Aorta (tissue), 5 donors: ENCODE measurements at regions of chr13 and their contacts with region 1.

Region 1: DNA sequence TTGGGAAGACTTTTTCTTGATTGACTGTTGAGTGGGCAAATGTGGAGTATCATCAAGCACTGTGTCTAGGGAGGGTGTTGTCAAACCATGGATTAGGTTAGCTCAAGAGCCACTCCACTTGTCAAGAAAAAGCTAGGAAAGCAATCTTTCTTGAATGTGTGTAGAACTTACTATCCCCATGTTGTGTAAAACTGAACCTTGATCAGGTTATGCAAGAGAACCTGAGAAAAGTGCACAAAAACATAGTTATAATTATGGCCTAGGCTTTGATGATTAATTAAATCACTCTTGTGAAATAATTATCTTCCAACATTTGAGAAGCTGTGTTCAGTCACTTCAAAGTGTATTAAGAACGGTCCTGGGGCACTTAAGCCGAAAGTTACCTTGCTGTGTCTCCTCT is 238.2 kb upstream of the OBI1 start:
- DNase-seq: no peak
- ATAC-seq: no peak
- H3K4me3 ChIP-seq: no peak overlapping the region
- H3K27ac ChIP-seq: no peak overlapping the region
- H3K4me1 ChIP-seq: no peaks in the 10 kb centered on the region
- H3K27me3 ChIP-seq: no peaks in the 10 kb centered on the region

Region 2: DNA sequence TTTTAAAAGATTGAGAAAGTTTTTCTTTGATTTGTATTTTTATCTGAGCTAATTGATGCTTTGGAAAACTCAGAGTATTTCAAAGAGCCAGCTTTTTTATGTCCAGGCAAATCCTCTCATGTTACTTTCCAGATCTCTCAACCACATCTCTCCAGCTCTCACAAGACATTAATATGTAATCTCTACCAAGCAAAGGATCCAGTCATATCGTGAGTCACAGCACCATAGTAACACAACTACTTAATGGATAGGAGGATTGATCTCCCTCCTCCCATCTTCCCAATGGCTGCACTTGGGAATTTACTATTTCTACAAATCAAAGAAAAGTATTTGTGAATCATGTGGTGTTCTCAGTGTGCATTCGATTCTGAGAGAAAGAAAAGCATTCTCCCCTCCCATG is 357.1 kb before region 1 on chr13:
- intact Hi-C with region 1: loop called in 1 of 2 experiments (anchors 5 kb)
- DNase-seq: no peak
- ATAC-seq: no peak
- H3K4me3 ChIP-seq: no peak overlapping the region
- H3K27ac ChIP-seq: no peak overlapping the region
- H3K4me1 ChIP-seq: no peaks in the 10 kb centered on the region
- H3K27me3 ChIP-seq: no peaks in the 10 kb centered on the region